Common myeloid progenitor, CD34-positive (primary cell): ENCODE measurements at regions of chrX and their contacts with region 1.

Region 1: GRCh38 chrX:134377537-134377936 is 82.4 kb upstream of the HPRT1 start:
- DNase-seq: peak; percentile 57 to 73 (median 71)
- H3K4me3 ChIP-seq: no peak overlapping the region
- H3K27ac ChIP-seq: no peak overlapping the region
- H3K4me1 ChIP-seq: peaks cover 0 to 11% (median 8%) of the 10 kb centered on the region in 4 experiments
- H3K27me3 ChIP-seq: no peaks in the 10 kb centered on the region

Region 2: GRCh38 chrX:134388161-134389109 is 10.9 kb after region 1 on chrX:
- CTCF ChIA-PET with region 1: interaction called, 10 read pairs
- POLR2A ChIA-PET with region 1: no interaction called
- DNase-seq: peak in 2 of 3 donors; percentile 50 to 62
- H3K4me3 ChIP-seq: peak overlapping the region in 1 of 7 experiments; percentile 23
- H3K27ac ChIP-seq: no peak overlapping the region
- H3K4me1 ChIP-seq: peaks cover 0 to 4% (median 1%) of the 10 kb centered on the region in 4 experiments
- H3K27me3 ChIP-seq: no peaks in the 10 kb centered on the region

Region 3: DNA sequence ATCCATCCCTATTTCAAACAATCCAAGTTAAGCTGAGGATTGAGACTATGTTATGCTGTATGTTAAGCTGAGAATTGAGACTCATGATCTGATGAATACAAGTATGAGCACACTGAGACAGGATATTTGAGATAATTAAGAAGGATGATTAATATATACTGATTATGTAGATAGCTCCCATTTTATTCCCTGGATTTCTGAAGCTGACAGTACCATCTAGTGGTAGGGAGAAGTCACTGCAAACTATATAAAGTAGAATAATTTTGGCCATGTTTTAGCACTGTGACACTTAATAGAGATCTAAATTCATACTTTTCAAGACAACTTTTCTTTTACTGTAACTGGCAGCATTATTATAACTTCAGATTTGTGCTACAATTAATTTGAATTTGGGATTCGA is 18.6 kb after region 1 on chrX:
- CTCF ChIA-PET with region 1: interaction called, 13 read pairs
- POLR2A ChIA-PET with region 1: interaction called, 3 read pairs
- DNase-seq: peak in 2 of 3 donors; percentile 23 to 28
- H3K4me3 ChIP-seq: no peak overlapping the region
- H3K27ac ChIP-seq: no peak overlapping the region
- H3K4me1 ChIP-seq: no peaks in the 10 kb centered on the region
- H3K27me3 ChIP-seq: no peaks in the 10 kb centered on the region

Region 4: DNA sequence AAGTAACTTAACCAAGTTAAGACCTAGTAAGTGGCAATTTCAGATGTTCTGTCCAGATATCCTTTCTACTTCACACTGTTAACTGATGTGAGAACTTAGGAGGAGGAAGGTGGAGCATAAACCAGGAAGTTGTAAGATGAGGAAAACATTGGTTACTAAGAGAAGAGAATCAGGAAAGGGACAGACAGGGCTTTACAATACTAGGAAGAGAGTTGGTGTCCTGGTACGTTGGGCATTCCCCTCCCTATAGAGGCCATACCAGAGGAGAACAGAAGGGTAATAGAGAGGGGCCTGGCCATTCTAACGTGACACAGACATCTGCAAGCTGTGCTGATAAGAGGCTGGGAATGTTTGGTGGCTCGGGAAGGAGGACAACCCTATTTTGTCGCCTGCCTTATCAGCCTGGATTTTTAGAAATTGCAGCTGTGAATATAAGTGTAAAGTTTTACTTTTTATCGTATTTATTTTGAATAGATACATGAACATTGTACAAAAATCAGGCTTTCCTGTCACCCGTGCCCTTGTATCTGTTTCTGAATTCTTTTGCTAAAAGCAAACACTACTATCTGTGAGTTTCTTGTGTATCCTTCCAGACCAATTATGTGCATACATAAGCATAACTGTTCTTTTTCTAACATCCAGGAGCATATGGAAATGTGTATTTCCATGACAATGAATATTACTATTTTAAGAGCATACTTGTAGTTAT is 29.0 kb after region 1 on chrX:
- CTCF ChIA-PET with region 1: no interaction called
- POLR2A ChIA-PET with region 1: no interaction called
- DNase-seq: no peak
- H3K4me3 ChIP-seq: no peak overlapping the region
- H3K27ac ChIP-seq: no peak overlapping the region
- H3K4me1 ChIP-seq: peaks cover 0 to 3% (median 0%) of the 10 kb centered on the region in 4 experiments
- H3K27me3 ChIP-seq: peaks cover 0 to 3% (median 0%) of the 10 kb centered on the region in 5 experiments